AG04449 (cell line): ENCODE measurements at regions of chrX and their contacts with region 1.

Region 1: GRCh38 chrX:16462912-16463311 is 187.0 kb upstream of the S100G start:
- DNase-seq: peak; percentile 87
- H3K4me3 ChIP-seq: 0 out of 2 replicates have a peak overlapping the region, but pooled peaks have one; percentile 15
- CTCF ChIP-seq: no peak

Region 2: DNA sequence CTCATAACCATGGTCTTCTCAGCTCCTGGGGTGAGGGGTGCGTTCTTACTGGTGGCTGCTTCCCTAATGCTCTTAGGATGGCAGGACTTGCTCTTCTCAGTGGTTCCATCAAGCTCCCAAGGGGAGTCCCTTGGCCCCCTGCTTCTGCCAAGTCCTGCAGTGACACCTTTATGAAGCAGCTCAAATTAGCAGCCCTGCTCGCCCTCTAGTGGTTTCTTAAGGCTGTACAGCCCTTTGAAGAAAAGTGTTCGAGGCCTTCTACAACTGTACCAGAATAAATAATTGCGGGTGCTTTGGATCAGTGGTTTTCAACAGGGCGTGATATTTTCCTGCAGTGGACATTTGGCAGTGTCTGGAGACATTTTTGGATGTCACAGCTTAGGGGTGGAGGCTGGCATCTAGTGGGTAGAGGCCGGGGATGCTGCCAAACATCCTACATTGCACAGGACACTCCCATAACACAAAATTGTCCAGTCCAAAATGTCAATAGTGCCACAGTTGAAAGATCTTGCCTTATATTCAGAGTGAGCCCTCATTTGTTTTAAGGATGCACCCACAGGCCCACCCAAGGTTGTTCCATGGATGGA is 17.7 kb before region 1 on chrX:
- CTCF ChIA-PET with region 1: interaction called, 13 read pairs
- POLR2A ChIA-PET with region 1: no interaction called
- DNase-seq: no peak
- H3K4me3 ChIP-seq: no peak overlapping the region
- CTCF ChIP-seq: peak; percentile 49